AG04450 (cell line): ENCODE measurements at regions of chr5 and their contacts with region 1.

Region 1: GRCh38 chr5:118987988-118988865 is at the start of gene DTWD2:
- DNase-seq: peak; percentile 77
- H3K4me3 ChIP-seq: peak within 1 kb of the TSS; percentile 74
- H3K27ac ChIP-seq: no peak within 1 kb of the TSS
- H3K27me3 ChIP-seq: no peaks in the 10 kb centered on the region
- CTCF ChIP-seq: peak; percentile 82
- polyA plus RNA-seq, gene DTWD2: 1.5 and 1.9 TPM in 2 replicates

Region 2: DNA sequence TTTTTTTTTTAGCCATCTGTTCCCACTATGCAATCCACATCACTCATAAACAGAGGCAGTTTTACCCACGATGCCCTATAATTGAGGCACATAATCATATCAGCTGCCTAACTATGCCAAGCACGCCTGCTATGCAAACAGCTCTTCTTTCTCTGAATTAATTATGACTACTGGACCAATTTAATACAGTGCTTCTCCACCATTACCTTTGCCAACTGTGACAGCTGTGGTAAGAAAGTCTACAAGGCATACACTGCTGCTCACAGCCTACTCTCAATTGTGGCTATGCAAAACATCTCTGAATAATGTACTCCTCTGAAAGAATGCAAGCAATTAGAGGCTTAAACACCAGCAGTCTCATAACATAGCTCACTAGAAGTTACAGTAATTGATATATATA is 97.0 kb before region 1 on chr5:
- CTCF ChIA-PET with region 1: no interaction called
- POLR2A ChIA-PET with region 1: no interaction called
- DNase-seq: no peak
- H3K4me3 ChIP-seq: no peak overlapping the region
- H3K27ac ChIP-seq: no peak overlapping the region
- H3K27me3 ChIP-seq: no peaks in the 10 kb centered on the region
- CTCF ChIP-seq: no peak

Region 3: GRCh38 chr5:118968925-118969375 is 19.3 kb before region 1 on chr5:
- CTCF ChIA-PET with region 1: interaction called, 15 read pairs
- POLR2A ChIA-PET with region 1: no interaction called
- DNase-seq: no peak
- H3K4me3 ChIP-seq: no peak overlapping the region
- H3K27ac ChIP-seq: no peak overlapping the region
- H3K27me3 ChIP-seq: no peaks in the 10 kb centered on the region
- CTCF ChIP-seq: no peak

Region 4: DNA sequence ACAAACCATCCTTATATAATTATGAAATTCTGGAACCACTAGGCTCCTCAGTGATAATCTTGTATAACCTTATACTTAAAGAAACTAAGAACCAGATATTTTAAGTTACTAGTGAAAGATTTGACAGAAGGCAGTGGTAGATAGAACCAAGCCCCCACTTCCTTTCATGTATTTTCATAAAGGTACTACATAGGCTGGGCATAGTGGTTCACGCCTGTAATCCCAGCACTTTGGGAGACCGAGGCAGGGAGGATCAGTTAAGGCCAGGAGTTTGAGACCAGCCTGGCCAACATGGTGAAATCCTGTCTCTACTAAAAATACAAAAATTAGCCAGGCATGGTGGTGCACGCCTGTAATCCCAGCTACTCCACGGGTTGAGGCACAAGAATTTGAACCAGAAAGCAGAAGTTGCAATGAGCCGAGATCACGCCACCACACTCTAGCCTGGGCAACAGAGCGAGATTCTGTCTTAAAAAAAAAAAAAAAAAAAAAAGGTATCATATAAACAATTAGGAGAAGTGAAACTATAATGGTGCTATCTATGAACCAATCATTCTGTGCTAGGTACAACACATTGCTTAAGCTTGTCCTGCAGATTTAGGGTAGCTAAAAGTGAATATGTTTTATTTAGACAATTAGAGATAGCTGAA is 28.0 kb after region 1 on chr5:
- CTCF ChIA-PET with region 1: interaction called, 10 read pairs
- POLR2A ChIA-PET with region 1: no interaction called
- DNase-seq: no peak
- H3K4me3 ChIP-seq: no peak overlapping the region
- H3K27ac ChIP-seq: no peak overlapping the region
- H3K27me3 ChIP-seq: no peaks in the 10 kb centered on the region
- CTCF ChIP-seq: no peak

Region 5: GRCh38 chr5:119274767-119275130 is 286.5 kb after region 1 on chr5:
- CTCF ChIA-PET with region 1: interaction called, 10 read pairs
- POLR2A ChIA-PET with region 1: no interaction called
- DNase-seq: peak; percentile 29
- H3K4me3 ChIP-seq: no peak overlapping the region
- H3K27ac ChIP-seq: no peak overlapping the region
- H3K27me3 ChIP-seq: no peaks in the 10 kb centered on the region
- CTCF ChIP-seq: no peak

Region 6: GRCh38 chr5:119405419-119405818 is 417.2 kb after region 1 on chr5:
- CTCF ChIA-PET with region 1: interaction called, 228 read pairs
- POLR2A ChIA-PET with region 1: no interaction called
- DNase-seq: no peak
- H3K4me3 ChIP-seq: no peak overlapping the region
- H3K27ac ChIP-seq: no peak overlapping the region
- H3K27me3 ChIP-seq: no peaks in the 10 kb centered on the region
- CTCF ChIP-seq: no peak

Region 7: GRCh38 chr5:119435436-119436132 is 447.4 kb after region 1 on chr5:
- CTCF ChIA-PET with region 1: interaction called, 72 read pairs
- POLR2A ChIA-PET with region 1: no interaction called
- DNase-seq: peak; percentile 23
- H3K4me3 ChIP-seq: no peak overlapping the region
- H3K27ac ChIP-seq: no peak overlapping the region
- H3K27me3 ChIP-seq: peaks cover 2% of the 10 kb centered on the region
- CTCF ChIP-seq: peak; percentile 83